ENCODE measurements at regions of chr12 and their contacts with region 1.

Region 1: DNA sequence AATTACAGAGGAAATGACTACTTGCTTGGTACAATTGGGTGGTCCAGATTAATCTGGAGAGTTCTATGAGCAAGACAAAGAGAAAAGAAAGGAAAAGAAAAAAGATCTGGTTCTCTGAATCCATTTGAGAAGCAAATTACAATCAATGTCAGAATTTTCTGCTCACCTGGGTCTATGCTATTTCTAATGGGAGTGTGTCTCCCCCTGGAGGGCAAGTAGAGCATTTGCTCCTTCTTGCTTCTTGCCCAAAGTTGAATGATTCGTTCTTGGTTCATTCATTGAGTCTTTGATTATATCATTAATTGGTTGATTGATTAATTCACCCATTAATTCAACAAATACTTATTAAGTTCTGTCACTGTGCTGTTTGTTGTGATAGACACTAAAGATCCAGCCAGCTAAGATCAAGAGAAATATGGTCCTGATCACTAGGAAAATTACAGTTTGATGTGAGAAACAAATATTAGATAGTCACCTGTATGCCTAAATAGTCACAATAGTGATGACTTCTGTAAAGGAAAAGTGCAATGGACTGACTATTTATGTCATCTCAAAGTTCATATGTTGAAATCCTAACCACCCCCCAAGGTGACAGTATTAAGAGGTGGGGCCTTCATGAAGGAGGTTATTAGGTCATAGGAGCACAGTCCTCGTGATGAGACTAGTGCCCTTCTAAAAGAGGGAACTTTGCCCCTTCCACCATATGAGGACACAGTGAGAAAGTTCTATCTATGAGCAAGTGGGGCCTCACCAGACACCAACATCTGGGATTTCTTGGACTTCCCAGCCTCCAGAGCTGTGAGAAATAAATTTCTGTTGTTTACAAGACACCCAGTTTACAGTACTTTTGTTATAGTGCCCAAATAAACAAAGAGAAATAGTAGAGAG is 8.0 kb upstream of the ASB8 start:
- DNase-seq: peak; percentile 58 to 77 (median 61)
- ATAC-seq: peak; percentile 82
- H3K4me3 ChIP-seq: no peak overlapping the region
- H3K27ac ChIP-seq: no peak overlapping the region
- H3K4me1 ChIP-seq: no peaks in the 10 kb centered on the region; a peak in 2 of 5 replicates
- H3K27me3 ChIP-seq: no peaks in the 10 kb centered on the region
- CTCF ChIP-seq: peak; percentile 72 to 92 (median 85)
- EP300 ChIP-seq: no peak
- POLR2A ChIP-seq: no peak
- RAD21 ChIP-seq: peak; percentile 89 to 94

Region 2: GRCh38 chr12:47949441-47950308 is 215.7 kb before region 1 on chr12:
- CTCF ChIA-PET with region 1: no interaction called
- POLR2A ChIA-PET with region 1: no interaction called
- in situ Hi-C with region 1: no loop called
- intact Hi-C with region 1: loop called (anchors 5 kb)
- DNase-seq: peak; percentile 83 to 86 (median 84)
- ATAC-seq: peak; percentile 96
- H3K4me3 ChIP-seq: no peak overlapping the region
- H3K27ac ChIP-seq: no peak overlapping the region
- H3K4me1 ChIP-seq: peaks cover 0 to 11% of the 10 kb centered on the region in 2 experiments; a peak in 3 of 5 replicates
- H3K27me3 ChIP-seq: peaks cover 6 to 49% of the 10 kb centered on the region in 2 experiments; a peak in 3 of 5 replicates
- CTCF ChIP-seq: peak; percentile 88 to 92 (median 92)
- EP300 ChIP-seq: no peak
- POLR2A ChIP-seq: no peak
- RAD21 ChIP-seq: peak; percentile 78 to 87

Region 3: DNA sequence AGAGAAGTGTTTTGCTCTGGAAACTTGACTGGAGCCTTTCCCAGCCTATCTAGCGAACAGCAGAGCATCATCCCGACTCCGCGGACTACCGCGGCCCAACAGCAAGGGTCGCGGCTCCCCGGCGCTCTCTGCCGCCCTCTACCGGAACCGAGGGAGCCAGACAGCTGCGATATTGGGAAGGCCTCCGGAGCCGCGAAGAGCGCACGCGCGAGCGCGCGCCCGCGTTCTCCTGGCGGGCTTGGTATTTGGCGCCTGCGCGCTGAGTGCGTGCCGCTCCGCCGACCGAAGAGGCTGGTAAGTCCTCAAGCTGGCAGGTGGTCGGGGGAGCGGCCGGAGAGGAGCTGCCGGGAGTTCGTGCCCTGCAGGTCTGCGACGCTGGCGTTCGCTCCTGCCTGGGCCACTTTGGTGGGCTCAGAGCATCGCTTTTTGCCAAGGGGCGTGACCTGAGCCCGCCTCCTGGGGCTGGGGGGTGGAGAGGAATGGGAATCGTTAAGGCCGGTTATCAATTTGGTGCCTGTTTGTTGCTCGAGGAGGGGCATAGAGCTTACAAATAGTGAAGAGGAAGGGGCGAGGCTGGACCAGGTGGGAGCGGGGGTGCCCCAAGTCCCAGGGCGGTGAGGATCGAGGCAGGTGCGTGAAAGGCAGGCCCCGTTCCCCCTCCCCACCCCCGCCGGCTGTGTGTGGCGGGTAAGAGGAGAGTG is 201.8 kb before region 1 on chr12 and contains the start of gene TMEM106C:
- CTCF ChIA-PET with region 1: interaction called, 3 read pairs
- POLR2A ChIA-PET with region 1: no interaction called
- in situ Hi-C with region 1: loop called (anchors 10 kb)
- intact Hi-C with region 1: loop called (anchors 5 kb)
- DNase-seq: peak; percentile 94 to 98 (median 98)
- ATAC-seq: peak; percentile 99
- H3K4me3 ChIP-seq: peak within 1 kb of the TSS; percentile 84
- H3K27ac ChIP-seq: no peak within 1 kb of the TSS; the same call in 1 of the 3 replicates
- H3K4me1 ChIP-seq: peaks cover 6 to 11% of the 10 kb centered on the region in 2 experiments; a peak in 4 of 5 replicates
- H3K27me3 ChIP-seq: peaks cover 14 to 27% of the 10 kb centered on the region in 2 experiments
- CTCF ChIP-seq: peak; percentile 97 to 98 (median 97)
- EP300 ChIP-seq: no peak
- POLR2A ChIP-seq: no peak
- RAD21 ChIP-seq: peak; percentile 43 to 76
- polyA plus RNA-seq, gene TMEM106C: 134 to 158 TPM

Region 4: DNA sequence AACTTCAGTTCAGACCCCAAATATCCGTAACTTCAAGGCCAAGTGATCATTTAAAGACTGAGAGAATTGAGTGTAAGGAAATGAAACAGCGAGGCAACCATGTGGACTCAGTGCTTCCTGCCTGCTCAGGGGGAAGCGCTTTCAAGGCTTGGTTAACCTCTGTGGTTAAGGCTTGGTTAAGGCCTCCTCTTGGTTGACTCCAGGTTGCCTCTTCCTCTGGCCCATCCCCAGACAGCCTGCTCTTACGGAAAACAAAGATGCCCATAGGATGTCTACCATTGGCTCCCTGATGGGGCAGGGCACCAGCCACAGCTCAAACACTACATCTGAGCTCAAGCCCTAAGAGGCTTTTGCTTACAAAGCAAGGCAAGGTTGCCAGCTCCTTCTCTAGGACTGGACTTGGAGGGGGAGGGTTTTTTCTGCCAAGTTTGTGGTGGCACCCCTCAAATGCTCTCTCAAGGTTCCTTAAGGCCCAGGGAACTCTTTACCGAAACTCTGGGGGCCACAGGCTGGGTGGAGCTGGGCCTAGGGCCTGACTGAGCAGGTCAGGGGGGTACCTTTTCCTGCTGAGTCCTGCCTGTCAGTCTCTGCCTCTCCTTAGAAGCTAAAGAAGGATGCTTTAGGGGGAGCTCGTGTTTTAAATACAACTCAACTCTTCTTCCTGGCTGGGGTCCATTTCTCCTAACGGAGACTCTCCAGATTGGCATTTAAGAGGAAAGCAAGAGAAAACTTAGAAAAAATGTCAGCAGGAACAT is 174.8 kb before region 1 on chr12:
- CTCF ChIA-PET with region 1: no interaction called
- POLR2A ChIA-PET with region 1: no interaction called
- in situ Hi-C with region 1: no loop called
- intact Hi-C with region 1: loop called (anchors 10 kb)
- DNase-seq: no peak
- ATAC-seq: no peak
- H3K4me3 ChIP-seq: no peak overlapping the region
- H3K27ac ChIP-seq: no peak overlapping the region
- H3K4me1 ChIP-seq: no peaks in the 10 kb centered on the region; a peak in 1 of 5 replicates
- H3K27me3 ChIP-seq: peaks cover 50 to 96% of the 10 kb centered on the region in 2 experiments
- CTCF ChIP-seq: peak in 1 of 3 experiments; percentile 19; a peak in 1 of 6 replicates
- EP300 ChIP-seq: no peak
- POLR2A ChIP-seq: no peak
- RAD21 ChIP-seq: no peak; a peak in 1 of 4 replicates

Region 5: GRCh38 chr12:48084066-48084465 is 81.3 kb before region 1 on chr12:
- CTCF ChIA-PET with region 1: interaction called, 42 read pairs
- POLR2A ChIA-PET with region 1: no interaction called
- in situ Hi-C with region 1: no loop called
- intact Hi-C with region 1: loop called (anchors 1 kb)
- DNase-seq: peak in 1 of 4 experiments; percentile 9
- ATAC-seq: no peak; the same call in 2 of the 3 replicates
- H3K4me3 ChIP-seq: no peak overlapping the region
- H3K27ac ChIP-seq: no peak overlapping the region
- H3K4me1 ChIP-seq: no peaks in the 10 kb centered on the region
- H3K27me3 ChIP-seq: no peaks in the 10 kb centered on the region
- CTCF ChIP-seq: peak in 1 of 3 experiments; percentile 45; a peak in 3 of 6 replicates
- EP300 ChIP-seq: no peak
- POLR2A ChIP-seq: no peak
- RAD21 ChIP-seq: peak in 1 of 2 experiments; percentile 52; a peak in 3 of 4 replicates

Region 6: DNA sequence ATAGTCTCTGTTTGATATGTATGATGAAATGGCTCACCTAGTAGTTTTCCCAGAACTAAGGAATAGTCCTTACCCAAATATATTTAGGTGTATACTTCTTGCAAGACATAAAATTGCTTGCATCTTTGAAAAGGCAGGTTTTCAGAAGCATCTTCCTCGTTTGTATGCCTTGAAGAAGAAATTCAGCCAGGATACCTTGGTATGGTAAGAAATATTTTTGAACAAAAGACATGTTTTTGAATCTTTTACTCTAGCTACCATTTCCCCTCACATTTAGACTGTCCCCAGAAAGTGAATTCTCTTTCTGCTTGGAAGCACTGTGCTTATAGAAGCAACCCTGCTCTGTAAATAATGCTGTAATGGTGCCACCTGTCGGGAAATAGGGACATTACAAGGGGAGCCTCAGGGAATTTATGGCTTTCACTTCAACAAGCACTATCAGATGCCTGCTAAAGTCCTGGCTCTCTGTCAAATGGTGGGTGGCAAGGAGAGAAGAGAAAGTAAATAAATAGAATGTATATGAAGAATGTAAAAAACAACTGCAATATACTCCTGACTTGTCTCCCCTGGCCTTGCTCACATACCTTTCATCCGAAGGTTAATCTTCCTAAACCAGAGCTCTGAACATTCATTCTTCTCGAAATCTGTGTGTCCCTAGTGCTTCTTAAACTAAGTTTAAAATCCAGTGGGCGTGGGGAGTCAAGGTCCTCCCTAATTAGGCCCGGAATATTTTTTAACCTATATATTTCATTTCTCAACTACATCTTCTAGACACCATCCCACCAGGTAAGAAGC is 24.2 kb after region 1 on chr12:
- CTCF ChIA-PET with region 1: interaction called, 3 read pairs
- POLR2A ChIA-PET with region 1: no interaction called
- in situ Hi-C with region 1: no loop called
- intact Hi-C with region 1: loop called (anchors 1 kb)
- DNase-seq: peak; percentile 68 to 84 (median 68)
- ATAC-seq: peak; percentile 87
- H3K4me3 ChIP-seq: no peak overlapping the region
- H3K27ac ChIP-seq: no peak overlapping the region
- H3K4me1 ChIP-seq: peaks cover 0 to 1% of the 10 kb centered on the region in 2 experiments; a peak in 2 of 5 replicates
- H3K27me3 ChIP-seq: peaks cover 20 to 26% of the 10 kb centered on the region in 2 experiments; a peak in 4 of 5 replicates
- CTCF ChIP-seq: peak; percentile 78 to 90 (median 81)
- EP300 ChIP-seq: no peak
- POLR2A ChIP-seq: no peak
- RAD21 ChIP-seq: peak; percentile 79 to 90

Measured in K562 (cell line).